AG04450 (cell line): ENCODE measurements at regions of chr3 and their contacts with region 1.

Region 1: GRCh38 chr3:52278510-52279069 is at the start of gene WDR82:
- DNase-seq: peak; percentile 74
- H3K4me3 ChIP-seq: peak within 1 kb of the TSS; percentile 99
- H3K27ac ChIP-seq: peak within 1 kb of the TSS; percentile 90
- H3K27me3 ChIP-seq: no peaks in the 10 kb centered on the region
- CTCF ChIP-seq: peak; percentile 53
- polyA plus RNA-seq, gene WDR82: 69.2 and 77.6 TPM in 2 replicates

Region 2: GRCh38 chr3:52238761-52239701 is 39.6 kb before region 1 on chr3 and contains the start of gene TWF2:
- CTCF ChIA-PET with region 1: interaction called, 8 read pairs
- POLR2A ChIA-PET with region 1: interaction called, 14 read pairs
- DNase-seq: peak; percentile 45
- H3K4me3 ChIP-seq: peak within 1 kb of the TSS; percentile 96
- H3K27ac ChIP-seq: peak within 1 kb of the TSS; percentile 99
- H3K27me3 ChIP-seq: no peaks in the 10 kb centered on the region
- CTCF ChIP-seq: peak; percentile 40
- polyA plus RNA-seq, gene TWF2: 96.6 and 128 TPM in 2 replicates

Region 3: GRCh38 chr3:52259035-52259434 is 19.6 kb before region 1 on chr3:
- CTCF ChIA-PET with region 1: interaction called, 12 read pairs
- POLR2A ChIA-PET with region 1: interaction called, 6 read pairs
- DNase-seq: no peak
- H3K4me3 ChIP-seq: no peak overlapping the region
- H3K27ac ChIP-seq: no peak overlapping the region
- H3K27me3 ChIP-seq: no peaks in the 10 kb centered on the region
- CTCF ChIP-seq: no peak

Region 4: GRCh38 chr3:52291508-52292181 is 13.1 kb after region 1 on chr3:
- CTCF ChIA-PET with region 1: interaction called, 4 read pairs
- POLR2A ChIA-PET with region 1: interaction called, 17 read pairs
- DNase-seq: no peak
- H3K4me3 ChIP-seq: no peak overlapping the region
- H3K27ac ChIP-seq: no peak overlapping the region
- H3K27me3 ChIP-seq: no peaks in the 10 kb centered on the region
- CTCF ChIP-seq: peak; percentile 51